Endothelial cell of umbilical vein (primary cell): ENCODE measurements at regions of chrX and their contacts with region 1.

Region 1: DNA sequence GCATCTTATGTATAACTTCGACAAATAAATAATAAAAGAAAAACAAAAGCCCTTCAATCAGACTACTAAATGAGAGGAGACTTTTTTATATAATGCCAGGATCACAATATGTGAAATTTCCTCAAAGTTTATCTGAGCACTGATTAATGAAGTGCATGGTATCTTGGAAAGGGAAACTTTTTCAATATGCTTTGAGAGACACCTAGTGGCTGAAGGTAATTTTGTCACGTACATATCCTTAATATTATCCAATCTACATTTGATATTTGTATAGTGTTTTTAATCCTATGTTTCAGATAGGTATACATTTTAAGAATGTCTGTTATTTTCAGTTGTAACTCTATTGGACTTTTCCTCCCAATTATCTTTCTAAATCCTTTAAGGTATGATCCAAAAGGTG is 146.8 kb downstream of the KLHL4 start:
- DNase-seq: peak; percentile 64
- H3K4me3 ChIP-seq: no peak overlapping the region
- H3K27ac ChIP-seq: no peak overlapping the region
- H3K4me1 ChIP-seq: peaks cover 6% of the 10 kb centered on the region
- H3K27me3 ChIP-seq: no peaks in the 10 kb centered on the region
- CTCF ChIP-seq: no peak
- POLR2A ChIP-seq: no peak

Region 2: DNA sequence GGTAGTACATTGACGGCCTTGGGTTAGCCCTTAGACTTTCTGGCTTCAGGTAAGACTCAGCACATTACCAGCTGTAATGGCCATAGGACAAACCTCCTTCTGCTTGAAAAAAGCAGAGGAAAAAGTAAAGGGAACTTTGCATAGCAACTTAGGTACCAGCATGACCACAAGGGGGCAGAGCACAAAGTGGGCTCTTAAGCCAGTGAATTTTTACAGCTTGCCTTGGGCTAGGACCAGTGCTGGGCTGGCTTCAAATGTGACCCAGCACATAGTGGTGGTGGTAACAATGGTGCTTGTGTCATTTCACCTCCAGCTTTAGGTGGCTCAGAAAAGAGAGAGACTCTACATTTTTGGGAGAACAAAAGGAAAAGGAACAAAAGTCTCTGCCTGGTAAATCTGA is 80.7 kb before region 1 on chrX:
- CTCF ChIA-PET with region 1: interaction called, 12 read pairs
- POLR2A ChIA-PET with region 1: no interaction called
- dilution Hi-C with region 1: no loop called
- intact Hi-C with region 1: loop called (anchors 1 kb)
- DNase-seq: peak; percentile 33
- H3K4me3 ChIP-seq: no peak overlapping the region
- H3K27ac ChIP-seq: no peak overlapping the region
- H3K4me1 ChIP-seq: no peaks in the 10 kb centered on the region
- H3K27me3 ChIP-seq: no peaks in the 10 kb centered on the region
- CTCF ChIP-seq: peak; percentile 42 to 47
- POLR2A ChIP-seq: no peak

Region 3: DNA sequence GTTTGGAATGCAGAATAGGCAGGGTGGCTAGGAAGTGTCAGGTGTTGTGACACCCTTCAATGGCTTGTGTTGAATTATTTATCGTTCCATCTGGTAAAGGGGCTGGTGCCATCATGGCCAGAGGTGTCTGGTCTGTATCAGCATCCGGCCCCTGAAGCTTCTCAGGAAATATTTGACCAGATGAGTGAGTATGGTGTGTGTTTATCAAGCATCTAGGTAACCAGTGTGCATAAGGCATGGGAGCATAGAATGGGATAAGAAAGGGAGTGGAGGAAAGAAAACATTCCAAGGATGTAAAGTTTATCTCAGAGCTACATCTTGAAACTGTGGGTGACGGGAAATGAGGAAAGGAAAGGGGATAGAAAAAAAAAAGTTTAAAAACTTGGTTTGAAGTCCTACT is 37.4 kb before region 1 on chrX:
- CTCF ChIA-PET with region 1: no interaction called
- POLR2A ChIA-PET with region 1: no interaction called
- dilution Hi-C with region 1: no loop called
- intact Hi-C with region 1: loop called (anchors 5 kb)
- DNase-seq: peak; percentile 54
- H3K4me3 ChIP-seq: no peak overlapping the region
- H3K27ac ChIP-seq: peak overlapping the region; percentile 71
- H3K4me1 ChIP-seq: peaks cover 37% of the 10 kb centered on the region
- H3K27me3 ChIP-seq: no peaks in the 10 kb centered on the region
- CTCF ChIP-seq: no peak
- POLR2A ChIP-seq: no peak